Psoas muscle (tissue), 8 donors: ENCODE measurements at regions of chr3 and their contacts with region 1.

Region 1: DNA sequence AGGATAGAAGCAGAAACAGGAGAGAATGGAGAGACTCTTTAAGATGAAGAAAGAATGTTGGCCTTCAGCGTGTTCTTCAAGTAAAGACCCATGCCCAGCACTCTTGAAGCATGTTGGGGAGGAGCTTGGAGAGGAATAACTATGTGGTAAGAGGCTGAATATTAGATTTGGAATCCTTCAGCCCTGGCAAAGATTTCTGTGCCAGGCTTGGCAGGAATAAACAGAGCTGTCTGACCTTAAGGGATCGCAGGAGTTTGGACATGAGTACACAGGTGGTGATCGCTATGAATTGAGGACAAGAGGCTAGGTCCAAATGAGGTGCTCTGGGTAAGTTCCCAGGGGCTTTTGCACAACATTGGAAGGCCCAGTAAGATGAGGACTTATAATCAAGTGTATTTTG is 132.6 kb upstream of the TBL1XR1 start:
- DNase-seq: no peak
- ATAC-seq: peak; percentile 79 to 86 (median 86)
- H3K4me3 ChIP-seq: no peak overlapping the region
- H3K27ac ChIP-seq: peak overlapping the region; percentile 18
- H3K4me1 ChIP-seq: peaks cover 21% of the 10 kb centered on the region
- H3K27me3 ChIP-seq: no peaks in the 10 kb centered on the region
- CTCF ChIP-seq: no peak

Region 2: GRCh38 chr3:177096615-177097014 is 233.2 kb before region 1 on chr3:
- intact Hi-C with region 1: no loop called
- DNase-seq: no peak
- ATAC-seq: no peak
- H3K4me3 ChIP-seq: no peak overlapping the region
- H3K27ac ChIP-seq: no peak overlapping the region
- H3K4me1 ChIP-seq: peaks cover under 1% of the 10 kb centered on the region
- H3K27me3 ChIP-seq: no peaks in the 10 kb centered on the region
- CTCF ChIP-seq: no peak

Region 3: GRCh38 chr3:177294221-177294620 is 35.6 kb before region 1 on chr3:
- intact Hi-C with region 1: loop called in 1 of 2 experiments (anchors 5 kb)
- DNase-seq: peak; percentile 53 to 70
- ATAC-seq: peak; percentile 96 to 99 (median 98)
- H3K4me3 ChIP-seq: no peak overlapping the region
- H3K27ac ChIP-seq: peak overlapping the region; percentile 83
- H3K4me1 ChIP-seq: peaks cover 11% of the 10 kb centered on the region
- H3K27me3 ChIP-seq: no peaks in the 10 kb centered on the region
- CTCF ChIP-seq: no peak